ENCODE measurements at regions of chr19 and their contacts with region 1.

Region 1: GRCh38 chr19:10960314-10961072 is at the start of gene SMARCA4:
- DNase-seq: peak; percentile 100
- H3K4me3 Mint-ChIP-seq: peak within 1 kb of the TSS; percentile 92
- H3K27ac Mint-ChIP-seq: peak within 1 kb of the TSS; percentile 93
- H3K4me1 Mint-ChIP-seq: peaks cover 36% of the 10 kb centered on the region
- H3K27me3 Mint-ChIP-seq: no peaks in the 10 kb centered on the region
- total RNA-seq, gene SMARCA4: 158 and 165 TPM in 2 replicates

Region 2: DNA sequence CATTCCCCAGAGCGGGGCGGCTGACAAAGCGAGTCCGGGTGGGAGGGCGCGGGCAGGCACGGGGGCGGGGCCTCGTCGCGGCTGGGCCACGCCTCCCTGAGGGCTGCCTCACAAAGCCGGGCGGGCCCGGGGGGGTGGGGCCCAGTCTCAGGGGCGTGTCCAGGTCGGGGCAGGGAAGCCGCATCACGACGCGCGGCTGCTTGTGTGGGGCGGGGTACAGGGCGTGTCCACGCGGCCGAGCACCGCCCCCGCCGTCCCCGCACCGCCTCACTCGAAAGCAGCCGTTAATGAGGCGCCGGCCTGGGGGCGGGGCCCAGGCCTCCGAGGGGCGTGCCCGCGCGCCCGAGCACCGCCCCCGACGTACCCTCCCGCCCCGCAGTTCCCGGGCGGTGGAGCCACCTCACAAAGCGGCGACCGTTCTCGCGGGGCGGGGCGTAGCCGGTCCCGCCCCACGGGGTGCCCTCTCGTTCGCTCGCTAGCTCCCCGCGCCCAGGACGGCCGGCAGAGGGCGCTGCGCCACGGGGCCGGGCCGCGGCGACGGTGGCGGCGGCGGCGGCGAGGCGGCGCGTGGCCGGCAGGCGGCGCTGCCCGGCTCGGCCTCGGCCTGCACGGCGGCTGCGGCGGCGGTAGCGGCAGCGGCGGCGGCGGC is 89.4 kb before region 1 on chr19 and contains the start of gene CARM1:
- intact Hi-C with region 1: loop called (anchors 5 kb)
- DNase-seq: peak; percentile 100
- H3K4me3 Mint-ChIP-seq: peak within 1 kb of the TSS; percentile 93
- H3K27ac Mint-ChIP-seq: peak within 1 kb of the TSS; percentile 96
- H3K4me1 Mint-ChIP-seq: peaks cover 30% of the 10 kb centered on the region
- H3K27me3 Mint-ChIP-seq: no peaks in the 10 kb centered on the region
- total RNA-seq, gene CARM1: 92.4 and 93.7 TPM in 2 replicates

Region 3: GRCh38 chr19:10928525-10929401 is 31.7 kb before region 1 on chr19 and contains the starts of genes TIMM29 and YIPF2:
- intact Hi-C with region 1: loop called (anchors 2 kb)
- DNase-seq: peak; percentile 98
- H3K4me3 Mint-ChIP-seq: peak within 1 kb of the TSS; percentile 96
- H3K27ac Mint-ChIP-seq: peak within 1 kb of the TSS; percentile 89
- H3K4me1 Mint-ChIP-seq: peaks cover 15% of the 10 kb centered on the region
- H3K27me3 Mint-ChIP-seq: no peaks in the 10 kb centered on the region
- total RNA-seq, gene TIMM29: 18.4 and 19.8 TPM in 2 replicates
- total RNA-seq, gene YIPF2: 21.7 and 23.2 TPM in 2 replicates

Region 4: GRCh38 chr19:10946964-10947657 is 13.4 kb before region 1 on chr19:
- intact Hi-C with region 1: loop called (anchors 2 kb)
- DNase-seq: no peak
- H3K4me3 Mint-ChIP-seq: no peak overlapping the region
- H3K27ac Mint-ChIP-seq: no peak overlapping the region
- H3K4me1 Mint-ChIP-seq: no peaks in the 10 kb centered on the region
- H3K27me3 Mint-ChIP-seq: no peaks in the 10 kb centered on the region

Region 5: GRCh38 chr19:11090054-11090900 is 129.8 kb after region 1 on chr19:
- intact Hi-C with region 1: loop called (anchors 2 kb)
- DNase-seq: peak; percentile 99
- H3K4me3 Mint-ChIP-seq: peak overlapping the region; percentile 97
- H3K27ac Mint-ChIP-seq: peak overlapping the region; percentile 100
- H3K4me1 Mint-ChIP-seq: peaks cover 36% of the 10 kb centered on the region
- H3K27me3 Mint-ChIP-seq: no peaks in the 10 kb centered on the region

Measured in activated CD4-positive, alpha-beta T cell treated with anti-CD3 and anti-CD28 coated beads, Interleukin-2, amount 10 ng/mL, durations not matched to agents 24 days and 14 days (primary cell).